Ovary (tissue), 10 donors: ENCODE measurements at regions of chr7 and their contacts with region 1.

Region 1: GRCh38 chr7:135286876-135287275 is 53.2 kb downstream of the STRA8 start:
- DNase-seq: no peak
- H3K4me3 ChIP-seq: no peak overlapping the region
- H3K27ac ChIP-seq: no peak overlapping the region
- H3K4me1 ChIP-seq: no peaks in the 10 kb centered on the region
- H3K27me3 ChIP-seq: no peaks in the 10 kb centered on the region
- CTCF ChIP-seq: no peak
- EP300 ChIP-seq: no peak
- POLR2A ChIP-seq: no peak

Region 2: DNA sequence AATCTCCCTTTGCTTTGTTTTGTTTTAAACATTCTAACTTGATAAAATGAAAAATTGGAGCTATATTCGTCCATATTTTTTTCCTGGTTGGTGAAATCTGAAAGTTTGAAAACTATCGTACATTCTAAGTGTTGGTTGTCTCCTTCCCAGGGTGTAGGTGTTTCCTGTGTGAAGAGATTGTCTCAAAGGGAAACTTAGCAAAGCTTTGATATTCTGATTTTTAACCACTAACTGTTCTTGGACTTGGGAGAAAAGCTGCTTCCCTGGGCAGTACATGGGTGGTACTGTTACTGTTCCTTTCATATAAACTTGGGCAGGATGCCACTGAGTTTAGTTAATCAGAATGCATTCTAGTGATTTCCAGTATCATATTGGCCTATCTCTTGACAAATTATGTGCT is 1413.2 kb before region 1 on chr7:
- intact Hi-C with region 1: no loop called
- DNase-seq: no peak
- H3K4me3 ChIP-seq: no peak overlapping the region
- H3K27ac ChIP-seq: no peak overlapping the region
- H3K4me1 ChIP-seq: no peaks in the 10 kb centered on the region
- H3K27me3 ChIP-seq: no peaks in the 10 kb centered on the region
- CTCF ChIP-seq: no peak
- EP300 ChIP-seq: no peak
- POLR2A ChIP-seq: no peak

Region 3: DNA sequence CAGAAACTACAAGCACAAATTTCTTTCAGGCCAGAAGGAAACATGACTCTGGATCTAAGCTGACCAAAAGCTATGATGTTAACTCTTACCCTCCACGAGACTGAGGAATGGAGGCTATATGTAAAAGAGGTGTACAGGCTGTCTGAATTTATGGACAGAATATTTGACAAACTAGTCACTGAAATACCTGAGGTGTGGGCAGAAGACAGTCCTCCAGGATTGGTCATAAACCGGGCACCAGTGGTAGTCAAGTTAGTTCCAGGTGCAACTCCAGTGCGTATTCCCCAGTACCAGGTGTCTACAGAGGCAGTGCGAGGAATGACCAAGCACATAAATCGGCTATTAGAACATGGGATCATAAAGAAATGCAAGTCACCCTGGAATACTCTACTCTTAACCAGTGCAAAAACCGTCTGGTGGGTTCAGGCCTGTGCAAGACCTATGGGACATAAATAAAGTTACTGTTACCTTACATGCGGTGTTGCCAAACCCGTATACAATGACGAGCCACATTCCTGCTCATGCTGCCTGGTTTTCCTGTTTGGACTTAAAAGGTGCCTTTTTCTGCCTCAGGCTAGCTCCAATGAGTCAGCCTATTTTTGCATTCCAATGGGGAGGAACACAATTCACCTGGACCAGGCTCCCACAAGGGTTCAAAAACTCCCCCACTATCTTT is 109.7 kb before region 1 on chr7:
- intact Hi-C with region 1: no loop called
- DNase-seq: no peak
- H3K4me3 ChIP-seq: no peak overlapping the region
- H3K27ac ChIP-seq: no peak overlapping the region
- H3K4me1 ChIP-seq: no peaks in the 10 kb centered on the region
- H3K27me3 ChIP-seq: no peaks in the 10 kb centered on the region
- CTCF ChIP-seq: no peak
- EP300 ChIP-seq: no peak
- POLR2A ChIP-seq: no peak

Region 4: DNA sequence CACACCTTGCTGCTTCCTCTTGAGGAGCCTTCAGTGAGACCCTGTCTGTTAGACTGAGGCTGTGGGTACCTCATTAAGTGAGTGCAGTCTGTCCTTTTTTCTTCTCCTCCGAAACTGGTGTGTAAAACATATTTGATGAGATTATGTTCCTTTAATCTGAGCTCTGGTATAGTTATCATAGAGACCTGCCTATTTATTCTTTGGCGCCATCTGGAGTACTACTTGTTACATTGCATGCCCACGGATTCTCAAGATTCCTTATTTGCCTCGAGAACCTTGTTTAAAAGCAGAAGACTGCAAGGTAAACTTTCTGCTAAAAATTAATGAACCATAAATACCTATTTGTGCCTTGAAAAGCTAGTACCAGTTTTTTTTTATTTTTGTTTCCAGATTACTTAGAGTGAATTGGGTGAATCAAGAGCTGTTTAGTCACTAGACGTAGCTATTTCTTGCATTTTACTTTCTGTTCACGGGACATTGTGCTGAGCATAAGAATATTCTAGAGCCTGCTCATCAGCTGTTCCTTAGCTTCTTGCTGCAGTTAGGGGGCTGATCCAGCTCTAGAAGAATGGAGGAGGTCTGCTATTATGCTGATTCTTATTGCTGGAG is 358.5 kb after region 1 on chr7:
- intact Hi-C with region 1: loop called in 3 of 4 experiments (anchors 5 to 10 kb)
- DNase-seq: no peak
- H3K4me3 ChIP-seq: no peak overlapping the region
- H3K27ac ChIP-seq: no peak overlapping the region
- H3K4me1 ChIP-seq: no peaks in the 10 kb centered on the region
- H3K27me3 ChIP-seq: no peaks in the 10 kb centered on the region
- CTCF ChIP-seq: peak in 2 of 3 donors; percentile 54 to 59
- EP300 ChIP-seq: no peak
- POLR2A ChIP-seq: no peak